Aorta (tissue), 5 donors: ENCODE measurements at regions of chr12 and their contacts with region 1.

Region 1: GRCh38 chr12:100908501-100908900 is 113.9 kb downstream of the ANO4 start:
- DNase-seq: no peak
- ATAC-seq: peak; percentile 33
- H3K4me3 ChIP-seq: no peak overlapping the region
- H3K27ac ChIP-seq: no peak overlapping the region
- H3K4me1 ChIP-seq: peaks cover 0 to under 1% of the 10 kb centered on the region in 2 donors
- H3K27me3 ChIP-seq: no peaks in the 10 kb centered on the region

Region 2: DNA sequence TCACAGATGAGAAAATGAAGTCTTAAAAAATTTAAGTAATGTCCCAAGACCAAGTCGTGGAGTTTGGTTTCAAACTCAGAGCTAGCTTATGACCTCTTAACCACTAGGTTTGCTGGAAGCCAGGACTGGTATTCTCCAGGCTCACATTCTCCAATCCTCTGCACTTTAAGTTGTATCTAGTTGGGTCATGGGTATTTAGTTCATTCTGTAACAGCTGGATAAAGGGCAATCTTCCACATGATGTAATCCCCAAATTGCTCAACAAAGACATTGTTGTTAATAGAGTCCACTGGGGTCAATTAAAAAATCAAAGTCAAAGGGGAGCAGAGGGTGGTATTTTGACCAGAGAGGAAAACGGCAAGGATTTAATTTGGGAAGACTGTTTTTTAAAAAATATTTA is 352.8 kb before region 1 on chr12:
- intact Hi-C with region 1: no loop called
- DNase-seq: no peak
- ATAC-seq: no peak
- H3K4me3 ChIP-seq: no peak overlapping the region
- H3K27ac ChIP-seq: no peak overlapping the region
- H3K4me1 ChIP-seq: no peaks in the 10 kb centered on the region
- H3K27me3 ChIP-seq: no peaks in the 10 kb centered on the region

Region 3: GRCh38 chr12:100789146-100789545 is 119.4 kb before region 1 on chr12:
- intact Hi-C with region 1: no loop called
- DNase-seq: no peak
- ATAC-seq: no peak
- H3K4me3 ChIP-seq: no peak overlapping the region
- H3K27ac ChIP-seq: no peak overlapping the region
- H3K4me1 ChIP-seq: no peaks in the 10 kb centered on the region
- H3K27me3 ChIP-seq: peaks cover 0 to 2% of the 10 kb centered on the region in 2 donors

Region 4: DNA sequence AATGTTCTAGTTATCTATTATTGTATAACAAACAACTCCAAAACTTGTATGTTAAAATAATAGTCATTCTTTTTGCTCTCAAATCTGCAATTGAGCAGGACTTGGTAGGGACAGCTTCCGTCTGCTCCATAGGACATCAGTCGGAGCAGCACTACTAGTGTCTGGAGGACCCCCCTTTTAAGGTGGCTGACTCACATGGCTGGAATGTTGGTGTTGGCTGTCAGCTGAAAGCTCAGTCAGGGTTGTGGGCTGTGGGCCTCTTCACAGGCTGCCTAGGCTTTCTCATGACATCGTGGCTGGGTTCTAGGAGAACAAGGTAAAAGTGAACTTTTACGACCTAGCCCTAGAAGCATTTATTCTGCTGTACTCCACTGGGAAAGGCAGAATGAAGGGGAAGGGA is 46.6 kb after region 1 on chr12:
- intact Hi-C with region 1: loop called in 1 of 2 experiments (anchors 5 kb)
- DNase-seq: peak; percentile 72 to 75
- ATAC-seq: no peak
- H3K4me3 ChIP-seq: no peak overlapping the region
- H3K27ac ChIP-seq: peak overlapping the region in 1 of 2 donors; percentile 20
- H3K4me1 ChIP-seq: peaks cover 0 to 6% of the 10 kb centered on the region in 2 donors
- H3K27me3 ChIP-seq: no peaks in the 10 kb centered on the region

Region 5: DNA sequence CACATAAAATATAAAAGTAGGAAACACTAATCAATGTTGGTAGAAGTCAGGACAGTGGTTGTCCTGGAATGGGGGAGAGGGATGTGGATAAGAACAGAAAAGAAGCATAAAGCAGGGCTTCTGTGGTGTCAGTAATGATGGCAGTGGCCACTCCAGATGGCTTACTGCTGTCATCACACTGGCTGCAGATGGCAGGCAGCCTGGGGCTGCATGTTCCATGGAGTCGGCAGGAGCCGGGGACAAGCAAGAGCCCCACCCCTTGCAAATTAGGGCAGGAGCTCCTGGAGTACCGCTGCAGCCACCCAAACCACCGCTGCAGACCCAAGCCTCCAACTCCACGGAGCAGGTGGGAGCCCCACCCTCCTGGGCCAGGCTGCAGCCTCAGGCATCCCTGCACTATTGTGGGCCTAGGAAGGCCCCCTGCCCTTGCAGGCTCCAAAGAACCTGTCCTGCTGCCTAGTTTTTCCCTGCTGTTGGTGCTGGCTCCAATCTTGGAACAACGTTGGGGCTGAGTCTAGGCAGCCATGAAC is 330.4 kb after region 1 on chr12:
- intact Hi-C with region 1: no loop called
- DNase-seq: no peak
- ATAC-seq: peak; percentile 57
- H3K4me3 ChIP-seq: no peak overlapping the region
- H3K27ac ChIP-seq: no peak overlapping the region
- H3K4me1 ChIP-seq: no peaks in the 10 kb centered on the region
- H3K27me3 ChIP-seq: peaks cover 0 to 2% of the 10 kb centered on the region in 2 donors